ENCODE measurements at regions of chr2 and their contacts with region 1.

Region 1: DNA sequence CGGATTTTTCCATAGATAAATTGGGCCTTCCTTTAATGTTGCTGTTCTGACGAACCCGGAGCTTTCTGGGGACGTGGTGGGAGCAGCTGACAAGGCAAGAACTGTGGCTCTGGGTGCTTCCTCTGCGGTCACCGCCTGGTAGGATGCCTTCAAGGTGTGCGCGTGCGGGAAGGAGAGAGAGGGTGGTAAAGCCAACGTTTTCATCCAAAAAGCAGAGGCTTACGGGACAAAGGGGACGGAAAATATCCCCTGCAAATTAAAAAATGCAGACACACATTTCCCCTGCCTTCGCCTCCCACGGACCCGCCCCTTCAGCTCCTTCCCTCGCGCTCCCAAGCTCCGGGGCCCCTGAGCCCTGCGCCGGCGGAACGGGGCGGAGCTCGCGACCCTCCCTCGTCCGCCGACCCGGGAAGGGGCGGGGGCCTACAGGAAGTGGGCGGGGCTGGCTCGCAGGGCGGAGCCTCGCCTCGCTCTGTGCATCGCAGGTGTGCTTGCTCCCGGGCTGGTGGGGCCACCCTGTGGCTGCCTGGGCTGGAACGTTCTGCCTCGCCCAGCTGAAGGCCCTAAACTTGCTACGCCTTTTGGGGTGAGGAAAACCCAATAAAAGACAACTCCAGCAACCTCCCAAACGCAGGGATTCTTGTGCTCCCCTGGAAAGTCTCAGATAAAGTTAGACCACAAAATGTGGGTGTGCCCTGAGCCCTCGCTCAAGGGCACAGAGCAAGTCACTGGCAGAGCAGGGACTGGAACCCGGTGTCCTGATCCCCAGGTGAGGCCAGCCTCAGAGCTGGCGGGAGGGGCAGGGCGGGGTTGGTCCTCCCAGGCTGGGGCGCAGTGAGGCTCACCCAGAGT is 25.4 kb upstream of the SLC66A3 start:
- DNase-seq: peak; percentile 65
- ATAC-seq: peak; percentile 24

Region 2: DNA sequence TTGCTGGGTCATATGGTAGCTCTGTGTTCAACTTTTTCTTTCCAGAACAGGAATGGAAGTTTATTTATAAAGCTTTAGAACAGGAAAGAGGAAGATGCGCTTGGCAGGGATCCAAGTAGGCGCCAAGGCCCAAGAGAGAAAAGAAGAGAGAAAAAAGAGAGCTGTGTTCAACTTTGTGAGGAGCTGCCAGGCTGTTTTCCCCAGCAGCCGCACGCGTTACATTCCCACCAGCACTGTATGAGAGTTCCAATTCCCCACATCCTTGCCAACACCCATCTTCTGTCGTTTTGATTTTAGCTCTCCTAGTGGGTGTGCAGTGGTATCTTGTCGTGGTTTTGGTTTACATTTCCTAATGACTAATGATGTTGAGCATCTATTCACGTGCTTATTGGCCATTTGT is 166.7 kb before region 1 on chr2:
- intact Hi-C with region 1: no loop called
- DNase-seq: peak; percentile 61
- ATAC-seq: no peak

Region 3: DNA sequence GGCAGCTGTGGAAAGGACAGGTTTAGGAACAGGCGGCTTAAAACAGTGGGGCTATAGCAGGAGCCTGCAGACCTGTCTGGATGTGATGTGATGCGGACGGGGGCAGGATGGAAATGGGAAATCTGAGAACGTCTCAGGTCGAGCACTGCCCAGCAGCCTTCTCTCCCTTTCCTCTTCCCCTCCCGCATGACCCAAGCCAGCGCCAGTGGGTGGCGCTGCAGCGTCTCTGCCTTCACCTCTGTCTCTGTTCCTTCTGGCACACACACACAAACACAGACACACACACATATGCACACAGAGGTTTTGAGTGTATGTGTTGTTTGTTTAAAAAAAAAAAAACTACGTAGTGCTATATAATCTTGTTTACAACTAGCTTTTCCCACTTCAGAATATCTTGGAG is 56.6 kb before region 1 on chr2:
- intact Hi-C with region 1: no loop called
- DNase-seq: no peak
- ATAC-seq: peak; percentile 27

Region 4: DNA sequence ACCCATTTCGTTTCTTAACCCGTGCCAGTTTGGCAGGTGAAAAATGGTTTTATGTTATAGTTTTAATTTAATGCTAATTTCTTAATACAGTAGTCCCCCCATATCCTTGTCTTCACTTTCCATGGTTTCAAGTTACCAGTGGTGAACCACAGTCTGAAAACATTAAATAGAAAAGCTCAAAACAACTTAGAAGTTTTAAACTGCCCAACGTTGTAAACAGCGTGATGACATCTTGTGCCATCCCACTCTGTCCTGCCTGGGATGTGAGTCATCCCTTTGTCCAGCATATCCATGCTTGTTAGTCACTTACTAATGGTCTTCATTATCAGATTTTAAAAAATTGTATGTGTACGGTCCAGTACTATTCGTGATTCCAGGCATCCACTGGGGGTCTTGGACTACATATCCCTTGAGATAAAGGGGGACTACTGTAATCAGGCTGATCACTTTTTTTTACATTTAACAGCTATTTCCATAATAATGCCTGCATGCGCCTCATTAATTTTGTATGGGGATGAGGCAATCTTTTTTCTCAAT is 57.3 kb after region 1 on chr2:
- intact Hi-C with region 1: loop called (anchors 10 kb)
- DNase-seq: no peak
- ATAC-seq: no peak

Region 5: GRCh38 chr2:11419781-11420180 is 290.0 kb after region 1 on chr2:
- intact Hi-C with region 1: loop called (anchors 10 kb)
- DNase-seq: no peak
- ATAC-seq: peak; percentile 92

Measured in Right ventricle myocardium superior (tissue), 1 donor.